HEK293T (cell line): ENCODE measurements at regions of chr1 and their contacts with region 1.

Region 1: GRCh38 chr1:206912445-206913095 is 9.2 kb downstream of the FCMR start:
- DNase-seq: peak; percentile 87

Region 2: DNA sequence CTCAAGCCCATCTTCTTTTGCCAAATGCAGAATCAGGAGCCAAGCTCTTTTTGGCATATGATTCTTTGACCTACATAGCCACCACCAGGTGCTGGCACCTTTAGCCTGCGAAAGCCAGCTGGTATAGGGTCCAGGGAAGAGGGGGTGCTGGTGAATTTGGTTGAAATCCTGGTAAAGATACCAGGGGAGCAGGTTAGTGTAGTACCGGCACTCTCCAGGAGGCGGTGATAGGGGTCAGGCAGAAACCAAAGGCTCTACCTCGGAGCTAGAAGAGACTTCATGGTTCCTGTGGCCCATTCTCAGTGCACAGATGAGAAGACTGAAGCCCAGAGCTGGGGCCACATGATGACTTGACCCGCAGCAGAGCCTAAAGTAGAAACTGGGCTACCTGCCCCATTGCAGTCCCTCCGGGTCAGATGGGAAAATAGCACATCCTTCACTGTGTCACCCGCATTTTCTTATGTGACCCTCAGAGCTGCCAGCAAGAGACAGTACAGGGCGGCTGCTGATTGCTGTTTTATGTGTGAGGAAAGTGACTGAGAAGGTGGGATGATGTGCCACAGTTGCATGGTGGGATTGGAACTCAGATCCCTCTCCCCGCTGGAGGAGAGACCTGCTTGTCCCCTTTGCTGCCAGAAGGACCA is 177.9 kb before region 1 on chr1:
- CTCF ChIA-PET with region 1: interaction called, 13 read pairs
- POLR2A ChIA-PET with region 1: interaction called, 3 read pairs
- DNase-seq: peak; percentile 76

Region 3: DNA sequence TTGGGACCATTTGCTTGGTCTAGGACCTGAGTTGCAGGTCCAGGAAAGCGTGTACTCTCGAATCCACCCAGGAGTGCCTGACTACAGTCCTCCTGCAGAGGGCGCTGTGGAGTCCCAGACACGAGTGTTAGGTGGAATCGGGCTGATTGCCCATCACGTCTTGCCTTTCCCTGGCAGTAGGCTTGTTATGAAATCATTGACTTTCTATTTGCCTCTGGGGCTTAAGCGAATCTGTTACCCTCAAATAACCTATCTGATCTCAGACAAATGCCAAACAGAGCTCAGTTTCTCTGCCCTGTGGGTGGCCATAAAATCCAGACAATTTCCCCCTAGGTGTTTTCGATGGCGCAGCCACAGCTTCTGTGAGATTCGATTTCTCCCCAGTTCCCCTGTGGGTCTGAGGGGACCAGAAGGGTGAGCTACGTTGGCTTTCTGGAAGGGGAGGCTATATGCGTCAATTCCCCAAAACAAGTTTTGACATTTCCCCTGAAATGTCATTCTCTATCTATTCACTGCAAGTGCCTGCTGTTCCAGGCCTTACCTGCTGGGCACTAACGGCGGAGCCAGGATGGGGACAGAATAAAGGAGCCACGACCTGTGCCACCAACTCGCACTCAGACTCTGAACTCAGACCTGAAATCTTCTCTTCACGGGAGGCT is 47.4 kb before region 1 on chr1 and contains the start of gene IL20:
- CTCF ChIA-PET with region 1: interaction called, 17 read pairs
- POLR2A ChIA-PET with region 1: no interaction called
- DNase-seq: peak; percentile 90

Region 4: DNA sequence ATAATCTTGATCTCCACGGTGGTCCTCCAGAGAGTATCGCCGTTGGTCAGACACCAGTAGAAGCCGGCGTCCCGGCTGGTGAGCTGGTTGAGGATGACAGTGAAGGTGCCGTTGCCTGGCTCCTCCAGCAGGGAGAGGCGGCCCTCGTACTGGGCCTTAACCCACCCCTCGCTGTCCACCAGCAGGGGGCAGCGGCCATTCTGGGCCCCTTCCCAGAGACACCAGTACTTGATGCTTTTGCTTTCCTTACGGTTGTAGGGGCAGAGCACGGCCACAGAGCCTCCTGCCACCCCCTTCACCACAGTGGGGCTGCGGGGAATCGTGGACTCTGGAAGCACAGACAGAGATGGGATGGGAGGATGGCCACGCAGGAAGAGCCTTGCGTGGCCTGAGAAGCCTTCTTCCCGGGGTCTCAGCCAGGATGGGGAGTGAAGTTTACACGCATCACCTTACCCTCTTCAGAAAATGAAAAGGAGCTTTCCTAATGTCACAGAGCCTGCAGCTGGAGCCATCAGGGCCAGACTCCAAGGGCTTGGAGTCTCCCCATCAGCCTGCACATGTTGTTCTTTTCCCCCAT is 23.0 kb after region 1 on chr1:
- CTCF ChIA-PET with region 1: interaction called, 13 read pairs
- POLR2A ChIA-PET with region 1: no interaction called
- DNase-seq: peak; percentile 79

Region 5: DNA sequence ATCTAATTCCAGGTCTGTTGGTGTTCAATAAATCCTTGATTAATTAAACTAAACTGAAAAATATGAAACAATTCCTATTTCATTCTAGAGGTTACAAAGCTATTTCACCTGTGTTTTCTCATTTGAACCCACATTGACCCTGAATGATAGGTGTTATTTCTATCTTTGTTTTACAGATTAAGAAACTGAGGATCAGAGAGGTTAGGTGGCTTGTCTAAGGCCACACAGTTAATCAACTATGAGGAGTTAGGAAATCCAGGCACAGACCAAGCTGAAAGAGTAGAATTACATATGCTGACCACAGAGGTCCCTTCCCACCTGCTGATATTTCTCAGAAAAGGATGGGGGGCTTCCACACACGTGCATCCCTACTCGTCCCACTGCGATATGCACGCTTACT is 33.2 kb after region 1 on chr1:
- CTCF ChIA-PET with region 1: no interaction called
- POLR2A ChIA-PET with region 1: no interaction called
- DNase-seq: no peak

Region 6: GRCh38 chr1:206982216-206982615 is 69.6 kb after region 1 on chr1:
- CTCF ChIA-PET with region 1: interaction called, 10 read pairs
- POLR2A ChIA-PET with region 1: interaction called, 3 read pairs
- DNase-seq: peak; percentile 77